Mammary epithelial cell (primary cell): ENCODE measurements at regions of chr4 and their contacts with region 1.

Region 1: GRCh38 chr4:152352622-152353116 is 183.2 kb downstream of the FBXW7 start:
- DNase-seq: peak; percentile 98
- H3K4me3 ChIP-seq: peak overlapping the region; percentile 57 to 96 (median 94)
- H3K27ac ChIP-seq: peak overlapping the region; percentile 92
- H3K4me1 ChIP-seq: peaks cover 16% of the 10 kb centered on the region
- H3K27me3 ChIP-seq: no peaks in the 10 kb centered on the region
- CTCF ChIP-seq: no peak

Region 2: DNA sequence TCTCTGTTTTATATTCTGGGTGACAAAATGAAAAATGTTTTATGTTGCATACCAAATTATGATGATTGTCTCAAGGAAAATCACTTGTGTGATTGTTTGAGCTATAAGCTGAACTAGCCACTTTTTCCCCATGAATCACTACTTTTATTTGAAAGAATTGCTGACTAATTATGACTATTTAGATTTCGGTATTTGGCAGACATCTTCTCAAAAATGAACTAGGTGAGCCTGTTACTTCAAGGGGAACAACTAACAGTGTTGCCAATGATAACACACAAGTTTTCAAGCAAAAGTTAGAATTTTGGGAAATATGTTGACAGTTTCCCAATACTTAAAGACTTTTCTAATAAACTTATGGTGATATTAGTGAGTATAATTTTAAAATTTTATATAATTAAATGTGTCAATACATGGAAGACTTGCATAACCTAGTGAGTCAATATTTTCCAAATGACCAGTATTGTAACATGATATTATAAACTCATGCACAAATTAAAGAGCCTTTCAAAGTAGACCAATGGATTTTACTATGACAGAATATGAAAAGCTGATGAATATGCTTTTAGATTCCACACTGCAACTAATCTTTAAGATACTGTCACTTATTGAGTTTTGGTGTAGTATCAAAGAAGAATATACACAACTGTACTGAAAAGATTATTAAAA is 404.2 kb before region 1 on chr4:
- CTCF ChIA-PET with region 1: no interaction called
- dilution Hi-C with region 1: no loop called
- in situ Hi-C with region 1: no loop called
- intact Hi-C with region 1: loop called (anchors 10 kb)
- DNase-seq: peak; percentile 83
- H3K4me3 ChIP-seq: no peak overlapping the region
- H3K27ac ChIP-seq: peak overlapping the region; percentile 67
- H3K4me1 ChIP-seq: peaks cover 5% of the 10 kb centered on the region
- H3K27me3 ChIP-seq: no peaks in the 10 kb centered on the region
- CTCF ChIP-seq: no peak

Region 3: GRCh38 chr4:152045807-152046571 is 306.7 kb before region 1 on chr4:
- CTCF ChIA-PET with region 1: no interaction called
- dilution Hi-C with region 1: no loop called
- in situ Hi-C with region 1: no loop called
- intact Hi-C with region 1: loop called (anchors 5 kb)
- DNase-seq: no peak
- H3K4me3 ChIP-seq: peak overlapping the region in 1 of 3 experiments; percentile 22
- H3K27ac ChIP-seq: no peak overlapping the region
- H3K4me1 ChIP-seq: peaks cover 4% of the 10 kb centered on the region
- H3K27me3 ChIP-seq: no peaks in the 10 kb centered on the region
- CTCF ChIP-seq: peak; percentile 53 to 70

Region 4: DNA sequence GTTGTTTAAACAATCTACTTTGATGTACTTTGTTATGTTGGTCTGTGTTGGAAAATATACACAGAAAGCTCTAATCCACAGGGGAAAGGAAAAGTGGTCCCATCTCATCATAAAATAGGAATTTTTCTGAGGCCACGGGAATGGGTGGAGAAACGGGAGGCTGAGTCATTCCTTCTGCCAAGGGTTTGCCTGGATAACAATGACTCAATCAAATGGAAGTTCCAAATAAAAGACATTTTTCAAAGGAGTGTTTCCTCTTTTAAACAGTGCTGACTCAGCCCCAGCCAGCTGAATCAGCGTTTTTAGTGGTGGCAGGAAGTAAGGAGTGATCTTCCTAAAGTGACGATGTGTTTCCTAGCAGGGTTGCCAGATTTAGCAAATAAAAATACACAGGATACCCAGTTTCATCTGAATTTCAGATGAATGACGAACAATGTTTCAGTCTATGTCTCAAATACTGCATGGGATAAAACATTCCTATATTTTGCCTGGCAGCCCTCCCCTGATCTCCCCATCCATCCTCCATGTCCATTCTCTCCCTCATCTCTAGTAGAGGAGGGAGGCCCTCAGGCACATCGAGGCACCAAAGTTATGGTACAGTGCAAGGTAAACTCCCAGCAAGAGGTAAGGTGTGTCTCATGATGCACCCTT is 246.4 kb before region 1 on chr4:
- CTCF ChIA-PET with region 1: no interaction called
- dilution Hi-C with region 1: no loop called
- in situ Hi-C with region 1: no loop called
- intact Hi-C with region 1: loop called (anchors 2 kb)
- DNase-seq: peak; percentile 92
- H3K4me3 ChIP-seq: no peak overlapping the region
- H3K27ac ChIP-seq: peak overlapping the region; percentile 74
- H3K4me1 ChIP-seq: peaks cover 28% of the 10 kb centered on the region
- H3K27me3 ChIP-seq: no peaks in the 10 kb centered on the region
- CTCF ChIP-seq: no peak

Region 5: GRCh38 chr4:152166567-152166966 is 186.1 kb before region 1 on chr4:
- CTCF ChIA-PET with region 1: no interaction called
- dilution Hi-C with region 1: no loop called
- in situ Hi-C with region 1: no loop called
- intact Hi-C with region 1: no loop called
- DNase-seq: no peak
- H3K4me3 ChIP-seq: no peak overlapping the region
- H3K27ac ChIP-seq: no peak overlapping the region
- H3K4me1 ChIP-seq: peaks cover 11% of the 10 kb centered on the region
- H3K27me3 ChIP-seq: no peaks in the 10 kb centered on the region
- CTCF ChIP-seq: no peak

Region 6: GRCh38 chr4:152258804-152259708 is 93.6 kb before region 1 on chr4:
- CTCF ChIA-PET with region 1: no interaction called
- dilution Hi-C with region 1: no loop called
- in situ Hi-C with region 1: no loop called
- intact Hi-C with region 1: loop called (anchors 2 kb)
- DNase-seq: peak; percentile 96
- H3K4me3 ChIP-seq: no peak overlapping the region
- H3K27ac ChIP-seq: peak overlapping the region; percentile 95
- H3K4me1 ChIP-seq: peaks cover 36% of the 10 kb centered on the region
- H3K27me3 ChIP-seq: no peaks in the 10 kb centered on the region
- CTCF ChIP-seq: peak in 1 of 2 donors; percentile 6

Region 7: DNA sequence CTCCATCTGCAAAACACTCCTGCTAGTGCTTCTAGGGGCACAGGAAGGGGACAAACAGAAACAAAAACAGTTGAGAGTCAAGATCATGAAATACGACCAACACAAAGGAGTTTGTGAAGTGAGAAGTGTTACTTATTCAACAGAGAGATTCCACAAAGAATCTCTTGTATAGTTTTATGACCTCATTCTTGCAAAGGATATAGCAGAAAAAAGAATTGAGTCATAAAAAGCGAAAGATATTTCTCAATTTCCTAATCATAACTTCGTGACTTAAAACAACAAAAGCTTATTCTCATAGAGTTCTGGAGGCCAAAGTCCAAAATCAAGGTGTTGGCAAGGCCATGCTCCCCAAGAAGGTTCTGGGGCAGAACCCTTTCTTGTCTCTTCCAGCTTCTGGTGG is 386.2 kb after region 1 on chr4:
- CTCF ChIA-PET with region 1: no interaction called
- dilution Hi-C with region 1: no loop called
- in situ Hi-C with region 1: no loop called
- intact Hi-C with region 1: no loop called
- DNase-seq: peak; percentile 67
- H3K4me3 ChIP-seq: no peak overlapping the region
- H3K27ac ChIP-seq: no peak overlapping the region
- H3K4me1 ChIP-seq: peaks cover 5% of the 10 kb centered on the region
- H3K27me3 ChIP-seq: no peaks in the 10 kb centered on the region
- CTCF ChIP-seq: no peak